Right cardiac atrium (tissue), 5 donors: ENCODE measurements at regions of chr16 and their contacts with region 1.

Region 1: DNA sequence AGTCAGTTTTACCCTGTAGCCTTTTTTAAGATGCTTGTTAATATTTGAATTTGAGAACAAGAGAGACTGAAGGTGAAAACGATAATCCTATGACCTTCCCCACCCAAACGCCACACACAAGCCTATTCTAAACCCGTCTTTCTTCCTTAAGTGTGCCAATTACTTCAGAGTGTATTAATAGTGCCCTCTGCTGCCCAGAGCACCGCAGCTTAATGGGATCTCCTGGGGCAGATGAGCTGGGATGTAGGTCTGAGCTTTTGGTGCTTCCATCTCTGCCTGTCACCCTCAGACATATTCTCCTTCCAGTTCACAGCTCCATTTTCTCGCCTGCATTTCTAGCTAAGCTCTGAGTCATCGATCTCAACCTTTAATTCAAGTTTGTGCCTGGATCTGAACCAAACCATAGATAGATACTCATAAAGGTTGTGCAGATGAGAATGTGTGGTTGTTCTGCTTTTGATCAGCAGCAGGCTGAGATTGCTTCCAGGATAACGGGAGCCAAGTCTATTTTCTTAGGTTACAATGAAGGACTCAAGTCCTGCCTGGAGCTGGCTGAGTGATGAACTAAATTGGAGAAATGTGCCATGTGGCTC is 46.4 kb upstream of the CDH13 start:
- DNase-seq: peak in 1 of 3 donors; percentile 53
- ATAC-seq: peak; percentile 58 to 65
- H3K4me3 ChIP-seq: no peak overlapping the region
- H3K27ac ChIP-seq: no peak overlapping the region
- H3K4me1 ChIP-seq: no peaks in the 10 kb centered on the region
- H3K27me3 ChIP-seq: no peaks in the 10 kb centered on the region

Region 2: GRCh38 chr16:82373976-82374375 is 206.4 kb before region 1 on chr16:
- intact Hi-C with region 1: loop called in 1 of 4 experiments (anchors 5 kb)
- DNase-seq: no peak
- ATAC-seq: no peak
- H3K4me3 ChIP-seq: no peak overlapping the region
- H3K27ac ChIP-seq: no peak overlapping the region
- H3K4me1 ChIP-seq: no peaks in the 10 kb centered on the region
- H3K27me3 ChIP-seq: no peaks in the 10 kb centered on the region